Activated CD8-positive, alpha-beta T cell treated with anti-CD3 and anti-CD28 coated beads for 36 hours (primary cell): ENCODE measurements at regions of chr1 and their contacts with region 1.

Region 1: GRCh38 chr1:65067491-65068201 is 80.4 kb upstream of the AK4 start:
- DNase-seq: peak; percentile 73
- ATAC-seq: peak; percentile 28
- H3K4me3 Mint-ChIP-seq: peak overlapping the region; percentile 91
- H3K27ac Mint-ChIP-seq: peak overlapping the region; percentile 99
- H3K4me1 Mint-ChIP-seq: peaks cover 43% of the 10 kb centered on the region
- H3K27me3 Mint-ChIP-seq: no peaks in the 10 kb centered on the region
- CTCF ChIP-seq: no peak

Region 2: GRCh38 chr1:64966158-64966971 is 101.3 kb before region 1 on chr1 and contains the start of gene JAK1:
- CTCF ChIA-PET with region 1: no interaction called
- POLR2A ChIA-PET with region 1: interaction called, 5 read pairs
- intact Hi-C with region 1: loop called (anchors 5 kb)
- DNase-seq: peak; percentile 88
- ATAC-seq: peak; percentile 84
- H3K4me3 Mint-ChIP-seq: peak within 1 kb of the TSS; percentile 86
- H3K27ac Mint-ChIP-seq: peak within 1 kb of the TSS; percentile 94
- H3K4me1 Mint-ChIP-seq: peaks cover 44% of the 10 kb centered on the region
- H3K27me3 Mint-ChIP-seq: no peaks in the 10 kb centered on the region
- CTCF ChIP-seq: no peak
- total RNA-seq, gene JAK1: 96.3 to 108 TPM

Region 3: DNA sequence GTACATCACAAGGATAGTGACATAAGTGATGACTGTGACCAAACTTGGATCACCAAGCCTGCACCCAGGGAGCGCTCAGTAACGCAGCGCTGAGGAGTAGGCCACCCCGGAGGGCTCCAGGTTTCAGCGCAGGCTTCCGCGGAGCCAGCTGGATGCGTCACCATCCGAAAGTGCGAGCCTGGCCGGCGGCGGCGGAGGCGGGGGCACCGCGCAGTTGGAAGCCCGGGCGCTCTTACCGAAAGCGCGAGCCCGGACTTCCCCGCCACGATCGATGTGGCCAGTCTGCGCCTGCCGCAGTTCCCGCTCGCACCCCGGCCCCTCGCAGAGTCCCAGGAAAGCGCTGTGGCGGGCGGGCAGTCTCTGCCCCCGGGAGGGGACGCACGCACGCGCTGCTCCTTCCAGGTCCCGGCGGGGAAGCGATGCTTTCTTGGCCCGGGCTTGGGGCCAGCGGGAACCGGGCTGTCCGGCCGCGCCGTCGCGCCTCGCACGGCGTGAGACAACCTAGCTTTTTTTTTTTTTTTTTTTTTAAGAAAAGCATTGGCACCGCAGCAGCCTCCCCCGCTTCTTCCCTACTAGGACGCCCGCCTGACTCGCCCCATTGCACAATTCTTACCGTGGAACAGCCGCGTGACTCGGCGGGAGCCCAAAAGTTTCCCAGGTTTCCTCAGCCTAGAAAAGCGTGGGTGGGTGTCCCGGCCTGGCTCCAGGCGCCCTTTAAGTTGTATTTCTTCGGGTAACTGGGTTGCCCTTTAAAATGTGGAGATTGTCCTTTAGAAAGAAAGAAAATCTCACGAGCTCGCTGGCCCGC is 64.9 kb before region 1 on chr1:
- CTCF ChIA-PET with region 1: no interaction called
- POLR2A ChIA-PET with region 1: interaction called, 7 read pairs
- intact Hi-C with region 1: loop called (anchors 5 kb)
- DNase-seq: peak; percentile 85
- ATAC-seq: peak; percentile 87
- H3K4me3 Mint-ChIP-seq: peak overlapping the region; percentile 57
- H3K27ac Mint-ChIP-seq: peak overlapping the region; percentile 67
- H3K4me1 Mint-ChIP-seq: peaks cover 27% of the 10 kb centered on the region
- H3K27me3 Mint-ChIP-seq: peaks cover 1% of the 10 kb centered on the region
- CTCF ChIP-seq: no peak

Region 4: DNA sequence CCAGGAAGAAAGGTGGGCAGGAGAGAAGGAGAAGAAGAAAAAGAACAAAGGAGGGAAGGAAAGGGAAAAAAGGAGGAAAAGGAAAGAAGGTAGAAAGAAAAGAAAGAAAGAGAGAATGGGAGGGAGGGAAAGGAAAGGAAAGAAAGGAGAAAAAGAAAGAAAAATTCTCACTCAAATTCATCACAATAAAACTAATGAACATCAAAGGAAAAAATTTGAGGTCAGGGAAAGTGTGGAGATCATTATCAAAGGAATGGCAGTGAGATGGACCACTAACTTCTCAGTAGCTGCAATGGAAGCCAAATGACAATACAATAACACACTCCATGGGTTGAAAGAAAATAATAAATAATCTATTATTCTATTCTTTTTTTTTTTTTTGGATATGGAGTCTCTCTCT is 53.3 kb before region 1 on chr1:
- CTCF ChIA-PET with region 1: no interaction called
- POLR2A ChIA-PET with region 1: no interaction called
- intact Hi-C with region 1: no loop called
- DNase-seq: no peak
- ATAC-seq: no peak
- H3K4me3 Mint-ChIP-seq: no peak overlapping the region
- H3K27ac Mint-ChIP-seq: no peak overlapping the region
- H3K4me1 Mint-ChIP-seq: peaks cover 21% of the 10 kb centered on the region
- H3K27me3 Mint-ChIP-seq: no peaks in the 10 kb centered on the region
- CTCF ChIP-seq: no peak

Region 5: GRCh38 chr1:65054481-65054880 is 13.2 kb before region 1 on chr1:
- CTCF ChIA-PET with region 1: interaction called, 12 read pairs
- POLR2A ChIA-PET with region 1: interaction called, 3 read pairs
- intact Hi-C with region 1: no loop called
- DNase-seq: no peak
- ATAC-seq: no peak
- H3K4me3 Mint-ChIP-seq: no peak overlapping the region
- H3K27ac Mint-ChIP-seq: no peak overlapping the region
- H3K4me1 Mint-ChIP-seq: peaks cover 23% of the 10 kb centered on the region
- H3K27me3 Mint-ChIP-seq: no peaks in the 10 kb centered on the region
- CTCF ChIP-seq: no peak